Activated CD4-positive, alpha-beta T cell treated with anti-CD3 and anti-CD28 coated beads, Interleukin-2, amount 10 ng/mL, durations not matched to agents 24 days and 14 days (primary cell): ENCODE measurements at regions of chr2 and their contacts with region 1.

Region 1: GRCh38 chr2:218568190-218569037 is at the starts of genes CNOT9 and USP37:
- DNase-seq: peak; percentile 100
- H3K4me3 Mint-ChIP-seq: peak within 1 kb of the TSS; percentile 93
- H3K27ac Mint-ChIP-seq: peak within 1 kb of the TSS; percentile 100
- H3K4me1 Mint-ChIP-seq: peaks cover 52% of the 10 kb centered on the region
- H3K27me3 Mint-ChIP-seq: no peaks in the 10 kb centered on the region
- total RNA-seq, gene CNOT9: 131 and 134 TPM in 2 replicates
- total RNA-seq, gene USP37: 45.0 and 45.5 TPM in 2 replicates

Region 2: GRCh38 chr2:218216674-218217359 is 351.6 kb before region 1 on chr2 and contains the start of gene ARPC2:
- intact Hi-C with region 1: loop called (anchors 5 kb)
- DNase-seq: peak; percentile 99
- H3K4me3 Mint-ChIP-seq: peak within 1 kb of the TSS; percentile 89
- H3K27ac Mint-ChIP-seq: peak within 1 kb of the TSS; percentile 94
- H3K4me1 Mint-ChIP-seq: peaks cover 37% of the 10 kb centered on the region
- H3K27me3 Mint-ChIP-seq: peaks cover 4% of the 10 kb centered on the region
- total RNA-seq, gene ARPC2: 515 and 516 TPM in 2 replicates

Region 3: DNA sequence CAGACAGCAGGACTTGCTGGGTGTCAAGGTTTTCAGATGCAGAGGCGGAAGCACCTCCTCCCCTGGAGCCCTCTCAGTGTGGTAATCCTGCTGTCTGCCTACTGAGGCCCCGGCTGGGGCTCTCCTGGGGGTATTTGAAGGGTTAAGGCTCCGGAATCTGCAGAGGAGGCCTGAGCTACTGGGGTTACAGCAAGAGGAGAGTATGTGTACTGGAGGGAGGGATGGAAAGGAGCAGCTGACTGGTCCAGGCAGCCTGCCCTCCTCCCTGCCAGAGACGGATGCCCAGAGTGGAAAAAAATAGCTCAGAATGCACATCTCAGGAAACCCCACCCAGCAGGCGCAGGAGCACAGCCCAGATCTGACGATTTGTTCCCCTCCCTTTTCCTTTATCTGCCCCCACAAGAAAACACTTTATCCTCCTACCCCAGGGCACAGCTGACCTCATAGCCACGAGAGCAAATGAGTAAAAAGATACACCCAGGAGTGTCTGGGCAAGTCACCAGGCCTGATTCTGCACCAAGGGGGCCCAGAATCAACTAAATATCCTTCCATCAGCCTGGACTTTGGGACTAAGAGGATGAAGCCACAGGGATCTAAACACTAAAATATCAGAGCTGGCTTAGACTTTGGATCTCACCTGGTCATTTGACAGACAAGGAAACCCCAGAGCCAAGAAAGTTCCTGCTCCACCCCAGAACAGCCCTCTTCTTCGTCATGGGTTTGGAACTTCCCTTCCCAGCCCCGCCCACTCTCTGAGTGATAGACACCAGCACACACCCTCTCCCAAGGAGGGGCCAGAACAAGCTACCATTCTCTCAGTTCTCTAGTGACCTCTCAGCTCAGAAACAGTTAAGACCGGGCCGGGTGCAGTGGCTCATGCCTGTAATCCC is 281.6 kb before region 1 on chr2:
- intact Hi-C with region 1: loop called (anchors 1 kb)
- DNase-seq: peak; percentile 95
- H3K4me3 Mint-ChIP-seq: peak overlapping the region; percentile 86
- H3K27ac Mint-ChIP-seq: peak overlapping the region; percentile 92
- H3K4me1 Mint-ChIP-seq: peaks cover 67% of the 10 kb centered on the region
- H3K27me3 Mint-ChIP-seq: no peaks in the 10 kb centered on the region

Region 4: GRCh38 chr2:218516614-218517013 is 51.8 kb before region 1 on chr2:
- intact Hi-C with region 1: loop called (anchors 5 kb)
- DNase-seq: peak; percentile 64
- H3K4me3 Mint-ChIP-seq: no peak overlapping the region
- H3K27ac Mint-ChIP-seq: no peak overlapping the region
- H3K4me1 Mint-ChIP-seq: peaks cover 32% of the 10 kb centered on the region
- H3K27me3 Mint-ChIP-seq: no peaks in the 10 kb centered on the region

Region 5: GRCh38 chr2:218659258-218659987 is 91.0 kb after region 1 on chr2 and contains the starts of genes BCS1L and ZNF142:
- intact Hi-C with region 1: loop called (anchors 1 kb)
- DNase-seq: peak; percentile 98
- H3K4me3 Mint-ChIP-seq: peak within 1 kb of the TSS; percentile 98
- H3K27ac Mint-ChIP-seq: peak within 1 kb of the TSS; percentile 95
- H3K4me1 Mint-ChIP-seq: peaks cover 31% of the 10 kb centered on the region
- H3K27me3 Mint-ChIP-seq: no peaks in the 10 kb centered on the region
- total RNA-seq, gene BCS1L: 92.9 and 94.4 TPM in 2 replicates
- total RNA-seq, gene ZNF142: 59.6 and 60.9 TPM in 2 replicates

Region 6: GRCh38 chr2:218710687-218711549 is 142.5 kb after region 1 on chr2 and contains the start of gene TTLL4:
- intact Hi-C with region 1: loop called (anchors 1 kb)
- DNase-seq: peak; percentile 100
- H3K4me3 Mint-ChIP-seq: peak within 1 kb of the TSS; percentile 94
- H3K27ac Mint-ChIP-seq: peak within 1 kb of the TSS; percentile 85
- H3K4me1 Mint-ChIP-seq: peaks cover 18% of the 10 kb centered on the region
- H3K27me3 Mint-ChIP-seq: peaks cover 3% of the 10 kb centered on the region
- total RNA-seq, gene TTLL4: 66.1 and 71.2 TPM in 2 replicates

Region 7: DNA sequence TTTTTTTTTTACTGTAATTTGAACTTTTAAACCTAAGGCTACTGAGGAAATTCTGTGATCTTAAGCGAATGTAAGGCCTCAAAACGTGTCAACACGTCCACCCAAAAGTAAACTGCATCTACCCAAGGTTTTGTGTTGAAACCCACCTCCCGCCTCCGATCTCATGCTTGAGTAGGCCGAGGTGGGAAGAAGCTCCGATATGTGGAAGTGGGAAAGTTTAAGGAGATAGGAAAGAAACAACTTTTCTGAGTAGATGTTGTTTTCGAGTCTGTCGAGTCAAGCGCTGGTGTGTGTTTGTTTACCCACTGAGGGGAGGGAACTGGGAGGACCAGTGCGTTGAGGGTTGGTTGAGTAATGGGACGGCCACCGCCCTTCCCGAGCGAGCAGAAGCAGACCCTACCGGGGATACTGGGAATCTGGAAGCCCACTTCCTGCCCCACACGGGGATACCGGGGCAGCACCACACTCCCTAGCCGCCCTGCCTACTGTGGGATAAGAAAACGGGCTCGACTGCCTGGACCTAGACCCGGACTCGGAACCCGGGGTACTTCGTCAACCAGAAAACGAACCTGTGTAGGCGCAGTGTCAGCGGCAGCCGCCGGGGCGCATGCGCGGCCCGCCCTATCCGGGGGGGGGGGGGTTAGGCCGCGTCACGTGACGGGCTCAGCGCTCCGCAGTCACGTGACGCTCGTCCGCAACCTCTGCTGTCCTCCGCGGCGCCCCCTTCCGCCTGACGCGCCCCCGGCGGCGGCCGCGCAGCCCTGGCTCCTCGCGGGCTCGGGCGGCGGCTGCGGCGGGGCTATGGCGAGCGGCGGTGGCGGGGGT is 609.4 kb after region 1 on chr2 and contains the start of gene RETREG2:
- intact Hi-C with region 1: loop called (anchors 2 kb)
- DNase-seq: peak; percentile 93
- H3K4me3 Mint-ChIP-seq: peak within 1 kb of the TSS; percentile 94
- H3K27ac Mint-ChIP-seq: peak within 1 kb of the TSS; percentile 99
- H3K4me1 Mint-ChIP-seq: peaks cover 62% of the 10 kb centered on the region
- H3K27me3 Mint-ChIP-seq: no peaks in the 10 kb centered on the region
- total RNA-seq, gene RETREG2: 54.1 and 57.4 TPM in 2 replicates